Psoas muscle (tissue), 8 donors: ENCODE measurements at regions of chr12 and their contacts with region 1.

Region 1: GRCh38 chr12:44812062-44812461 is 64.1 kb downstream of the NELL2 start:
- DNase-seq: no peak
- ATAC-seq: no peak
- H3K4me3 ChIP-seq: no peak overlapping the region
- H3K27ac ChIP-seq: no peak overlapping the region
- H3K4me1 ChIP-seq: no peaks in the 10 kb centered on the region
- H3K27me3 ChIP-seq: no peaks in the 10 kb centered on the region
- CTCF ChIP-seq: no peak

Region 2: GRCh38 chr12:44709166-44709565 is 102.9 kb before region 1 on chr12:
- intact Hi-C with region 1: loop called in 1 of 2 experiments (anchors 5 kb)
- DNase-seq: no peak
- ATAC-seq: no peak
- H3K4me3 ChIP-seq: no peak overlapping the region
- H3K27ac ChIP-seq: no peak overlapping the region
- H3K4me1 ChIP-seq: no peaks in the 10 kb centered on the region
- H3K27me3 ChIP-seq: peaks cover 0 to 2% (median 0%) of the 10 kb centered on the region in 3 donors
- CTCF ChIP-seq: no peak

Region 3: GRCh38 chr12:44947163-44947562 is 135.1 kb after region 1 on chr12:
- intact Hi-C with region 1: no loop called
- DNase-seq: no peak
- ATAC-seq: no peak
- H3K4me3 ChIP-seq: no peak overlapping the region
- H3K27ac ChIP-seq: no peak overlapping the region
- H3K4me1 ChIP-seq: no peaks in the 10 kb centered on the region
- H3K27me3 ChIP-seq: no peaks in the 10 kb centered on the region
- CTCF ChIP-seq: no peak